Heart right ventricle (tissue), 16 donors: ENCODE measurements at regions of chr15 and their contacts with region 1.

Region 1: DNA sequence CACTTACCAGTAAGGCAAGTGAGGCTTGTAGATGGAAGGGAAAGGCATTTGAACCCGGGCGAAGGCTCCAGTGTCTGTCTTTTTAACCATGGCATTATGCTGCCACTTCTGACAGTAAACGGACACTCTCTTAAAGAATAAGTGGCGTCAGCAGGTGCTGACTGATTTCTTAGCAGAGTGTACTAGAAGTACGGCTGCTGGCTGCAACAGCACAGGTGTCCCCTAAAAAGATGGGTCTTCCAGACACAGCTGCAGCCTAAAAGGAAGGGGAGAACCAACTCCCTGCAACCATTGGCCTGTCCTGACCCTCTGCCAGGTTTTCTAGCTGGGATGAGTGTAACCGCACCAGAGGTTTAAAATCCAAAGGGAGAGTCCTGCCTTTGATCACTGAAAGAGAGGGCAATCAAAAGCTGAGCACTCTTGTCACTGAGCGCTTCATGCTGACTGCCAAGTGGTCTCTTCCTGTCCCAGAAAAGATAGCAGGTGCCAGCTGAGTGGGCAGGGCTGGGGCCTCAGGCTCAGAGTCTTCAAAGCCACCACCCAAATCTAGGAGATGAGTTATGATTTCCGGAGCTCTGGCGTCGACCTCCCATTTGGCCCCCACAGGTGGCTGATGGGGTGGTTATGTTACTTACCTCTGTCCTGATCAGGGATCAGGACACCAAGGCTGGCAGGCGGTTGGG is 255.8 kb downstream of the SLCO3A1 start:
- DNase-seq: no peak
- ATAC-seq: peak in 1 of 8 donors; percentile 16
- H3K4me3 ChIP-seq: no peak overlapping the region
- H3K27ac ChIP-seq: no peak overlapping the region
- H3K4me1 ChIP-seq: peaks cover 0 to 53% (median 21%) of the 10 kb centered on the region in 9 donors
- H3K27me3 ChIP-seq: no peaks in the 10 kb centered on the region
- CTCF ChIP-seq: no peak

Region 2: DNA sequence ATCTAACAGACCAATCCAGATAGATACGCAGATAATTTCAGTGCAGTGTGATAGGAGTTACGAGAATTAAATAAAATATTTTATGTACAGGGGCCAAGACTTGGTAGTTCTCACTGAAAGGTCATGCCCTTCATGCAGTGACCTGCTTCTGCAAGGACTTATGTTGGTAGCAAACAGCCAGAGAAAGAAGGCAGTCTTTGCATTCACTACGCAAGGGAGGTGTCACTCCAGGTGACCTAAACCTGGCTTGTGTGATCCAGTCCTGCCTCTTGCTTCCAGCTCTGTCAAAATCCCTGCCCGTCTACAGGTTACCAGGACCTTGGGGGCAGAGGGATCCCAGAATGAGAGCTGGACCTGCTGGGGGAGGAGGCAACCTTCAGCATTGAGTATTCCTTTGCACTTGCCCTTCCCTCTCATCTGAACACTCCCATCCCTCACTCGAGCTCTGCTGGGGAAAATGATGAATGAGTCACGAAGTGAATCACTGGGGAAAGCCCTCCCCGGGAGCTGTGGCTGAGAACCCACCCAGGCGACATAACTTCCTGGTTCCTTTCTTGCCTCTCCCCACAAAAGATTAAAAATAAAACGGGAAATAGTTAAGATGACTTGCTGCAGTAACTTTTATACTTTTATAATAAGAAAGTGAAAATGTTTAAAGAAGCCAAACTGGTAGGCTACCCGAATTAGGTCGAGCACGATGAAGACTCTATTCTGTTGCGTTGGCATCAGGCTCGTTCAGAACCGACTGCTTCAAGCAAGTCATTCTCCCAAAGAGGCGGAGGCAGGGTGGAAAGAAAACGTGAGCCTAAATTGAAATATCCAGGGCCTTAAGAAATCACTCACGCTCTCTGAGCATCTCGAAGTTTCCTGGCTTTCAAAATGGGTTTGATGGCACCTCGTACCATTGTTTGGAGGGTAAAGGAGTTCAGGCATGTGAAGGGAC is 39.8 kb before region 1 on chr15:
- intact Hi-C with region 1: no loop called
- DNase-seq: peak in 1 of 2 donors; percentile 68
- ATAC-seq: peak; percentile 65 to 92 (median 82)
- H3K4me3 ChIP-seq: peak overlapping the region in 8 of 10 donors; percentile 9 to 39 (median 30)
- H3K27ac ChIP-seq: peak overlapping the region in 9 of 10 donors; percentile 29 to 81 (median 72)
- H3K4me1 ChIP-seq: peaks cover 8 to 70% (median 66%) of the 10 kb centered on the region in 9 donors
- H3K27me3 ChIP-seq: no peaks in the 10 kb centered on the region
- CTCF ChIP-seq: no peak

Region 3: DNA sequence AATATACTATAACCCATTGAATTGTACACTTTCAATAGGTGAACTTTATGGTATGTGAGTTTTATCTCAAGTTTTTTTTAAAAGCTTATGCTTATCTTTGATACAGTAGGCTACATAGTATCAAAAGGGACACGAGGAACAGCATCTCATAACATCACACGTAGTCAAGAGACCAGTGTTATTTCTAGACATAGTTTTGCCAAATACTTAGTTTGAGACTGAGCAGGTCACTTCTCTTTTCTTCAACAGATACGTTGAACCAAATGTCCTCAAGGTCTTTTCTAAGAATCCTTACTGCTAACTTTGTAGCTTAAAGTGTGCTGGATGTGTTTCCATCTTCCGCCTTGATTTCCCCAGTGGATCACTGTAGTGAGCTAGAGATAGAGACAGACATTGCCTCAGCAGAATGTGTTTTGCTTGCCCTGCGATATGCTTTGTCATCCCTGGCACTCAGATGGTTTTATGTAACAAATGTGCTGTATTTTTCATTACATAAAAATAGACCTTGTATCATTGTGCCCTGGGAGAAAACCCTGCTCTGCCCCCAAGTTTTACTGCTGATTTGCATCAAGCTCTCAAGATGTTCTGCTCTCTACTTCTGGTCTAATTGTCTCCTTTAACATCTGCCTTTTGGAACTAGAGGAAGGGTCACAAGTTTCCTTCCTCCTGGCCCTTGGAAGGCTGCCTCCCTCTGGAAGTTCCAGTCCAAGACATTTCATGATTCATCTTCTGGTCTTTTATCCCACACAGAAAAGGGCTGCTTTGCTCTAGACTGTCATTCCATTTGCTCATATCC is 1406.1 kb after region 1 on chr15:
- intact Hi-C with region 1: loop called in 1 of 10 experiments (anchors 5 kb)
- DNase-seq: peak in 1 of 2 donors; percentile 59
- ATAC-seq: peak; percentile 76 to 93 (median 90)
- H3K4me3 ChIP-seq: no peak overlapping the region
- H3K27ac ChIP-seq: peak overlapping the region in 9 of 10 donors; percentile 2 to 73 (median 46)
- H3K4me1 ChIP-seq: peaks cover 0 to 14% (median 8%) of the 10 kb centered on the region in 9 donors
- H3K27me3 ChIP-seq: peaks cover 0 to 3% (median 0%) of the 10 kb centered on the region in 7 donors
- CTCF ChIP-seq: peak in 4 of 9 donors; percentile 18 to 35 (median 24)